Activated naive CD4-positive, alpha-beta T cell treated with anti-CD3 and anti-CD28 coated beads, Interleukin-2, amount 10 ng/mL, durations not matched to agents 7 days and 5 days (primary cell): ENCODE measurements at regions of chr7 and their contacts with region 1.

Region 1: GRCh38 chr7:101217388-101218235 is at the starts of genes PLOD3 and ZNHIT1:
- DNase-seq: peak; percentile 98
- H3K4me3 Mint-ChIP-seq: peak within 1 kb of the TSS; percentile 96
- H3K27ac Mint-ChIP-seq: peak within 1 kb of the TSS; percentile 88
- H3K4me1 Mint-ChIP-seq: peaks cover 45% of the 10 kb centered on the region
- H3K27me3 Mint-ChIP-seq: no peaks in the 10 kb centered on the region

Region 2: DNA sequence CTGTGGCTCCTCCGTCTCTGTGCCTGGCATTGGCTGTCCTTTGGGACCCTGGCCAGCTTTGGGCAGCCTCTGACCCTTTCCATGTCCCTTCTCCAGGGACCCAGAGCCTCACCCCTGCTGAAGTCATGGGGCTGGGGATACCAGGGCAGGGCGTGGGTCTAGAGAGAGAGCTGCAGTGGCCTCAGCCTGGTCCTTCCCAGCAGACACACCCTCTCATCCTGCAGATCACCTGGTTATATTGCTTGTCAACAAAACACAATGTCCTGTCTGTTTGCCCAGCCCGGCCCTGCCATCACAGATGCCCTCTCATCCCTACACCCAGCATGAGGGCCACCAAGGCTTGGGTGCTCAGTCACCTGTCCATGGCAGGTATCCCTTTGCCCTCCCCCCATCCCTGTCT is 195.9 kb before region 1 on chr7:
- CTCF ChIA-PET with region 1: no interaction called
- DNase-seq: no peak
- H3K4me3 Mint-ChIP-seq: no peak overlapping the region
- H3K27ac Mint-ChIP-seq: no peak overlapping the region
- H3K4me1 Mint-ChIP-seq: peaks cover 7% of the 10 kb centered on the region
- H3K27me3 Mint-ChIP-seq: peaks cover 43% of the 10 kb centered on the region

Region 3: GRCh38 chr7:101197991-101198390 is 19.6 kb before region 1 on chr7:
- CTCF ChIA-PET with region 1: interaction called, 10 read pairs
- DNase-seq: no peak
- H3K4me3 Mint-ChIP-seq: no peak overlapping the region
- H3K27ac Mint-ChIP-seq: no peak overlapping the region
- H3K4me1 Mint-ChIP-seq: peaks cover 16% of the 10 kb centered on the region
- H3K27me3 Mint-ChIP-seq: peaks cover 70% of the 10 kb centered on the region

Region 4: DNA sequence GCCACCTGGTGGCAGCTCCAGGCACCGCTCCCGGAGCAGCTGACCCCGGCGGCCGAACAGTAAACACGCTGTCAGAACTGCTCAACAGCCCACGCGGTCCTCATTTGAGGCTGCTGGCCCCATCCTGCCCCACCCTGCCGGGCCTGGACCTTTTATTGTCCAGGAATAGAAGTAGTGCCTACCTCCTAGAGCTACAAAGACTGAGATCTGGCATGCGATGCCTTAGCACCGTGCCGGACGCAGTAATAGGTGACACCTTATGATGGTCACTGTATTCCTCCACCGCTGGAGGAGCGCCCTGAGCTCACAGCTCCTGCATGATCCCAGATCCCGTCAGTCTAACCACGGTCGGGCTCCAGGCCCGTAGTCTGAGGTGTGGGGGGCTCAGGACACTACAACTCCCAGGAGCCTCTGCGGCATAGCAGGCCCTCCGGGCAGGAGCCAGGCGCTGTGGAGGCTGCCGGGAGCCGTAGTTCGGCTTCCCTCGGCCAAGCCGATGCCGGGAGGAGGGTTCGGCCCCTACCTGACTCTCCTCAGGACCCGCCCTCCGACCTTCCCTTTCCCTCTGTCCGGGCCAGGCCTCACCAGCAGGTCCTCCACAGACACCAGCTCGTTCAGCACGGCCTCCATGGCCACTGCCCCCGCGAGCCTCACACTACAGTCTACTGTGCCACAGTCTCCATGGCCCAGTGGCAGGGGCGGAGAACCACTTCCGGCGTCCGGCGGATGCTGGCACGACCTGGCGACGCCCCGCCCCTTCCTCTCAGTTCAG is 26.9 kb after region 1 on chr7 and contains the start of gene FIS1:
- CTCF ChIA-PET with region 1: interaction called, 33 read pairs
- DNase-seq: peak; percentile 96
- H3K4me3 Mint-ChIP-seq: peak within 1 kb of the TSS; percentile 92
- H3K27ac Mint-ChIP-seq: peak within 1 kb of the TSS; percentile 97
- H3K4me1 Mint-ChIP-seq: peaks cover 50% of the 10 kb centered on the region
- H3K27me3 Mint-ChIP-seq: no peaks in the 10 kb centered on the region